CD8-positive, alpha-beta T cell (primary cell): ENCODE measurements at regions of chr12 and their contacts with region 1.

Region 1: GRCh38 chr12:5745265-5745888 is 199.7 kb downstream of the ANO2 start:
- DNase-seq: peak; percentile 16 to 64 (median 46)
- ATAC-seq: peak; percentile 56
- H3K4me3 ChIP-seq: no peak overlapping the region
- H3K4me3 Mint-ChIP-seq: no peak overlapping the region
- H3K27ac ChIP-seq: no peak overlapping the region
- H3K27ac Mint-ChIP-seq: no peak overlapping the region
- H3K4me1 ChIP-seq: peaks cover 18% of the 10 kb centered on the region
- H3K4me1 Mint-ChIP-seq: peaks cover 34% of the 10 kb centered on the region
- H3K27me3 ChIP-seq: no peaks in the 10 kb centered on the region
- H3K27me3 Mint-ChIP-seq: no peaks in the 10 kb centered on the region
- CTCF ChIP-seq: peak; percentile 50

Region 2: GRCh38 chr12:5796171-5796958 is 51.0 kb after region 1 on chr12:
- CTCF ChIA-PET with region 1: interaction called, 19 read pairs
- POLR2A ChIA-PET with region 1: interaction called, 3 read pairs
- intact Hi-C with region 1: loop called in 1 of 2 experiments (anchors 1 kb)
- DNase-seq: peak in 4 of 9 experiments; percentile 17 to 34 (median 24)
- ATAC-seq: peak; percentile 29
- H3K4me3 ChIP-seq: no peak overlapping the region
- H3K4me3 Mint-ChIP-seq: no peak overlapping the region
- H3K27ac ChIP-seq: no peak overlapping the region
- H3K27ac Mint-ChIP-seq: no peak overlapping the region
- H3K4me1 ChIP-seq: no peaks in the 10 kb centered on the region
- H3K4me1 Mint-ChIP-seq: no peaks in the 10 kb centered on the region
- H3K27me3 ChIP-seq: peaks cover 0 to 2% of the 10 kb centered on the region in 2 experiments
- H3K27me3 Mint-ChIP-seq: peaks cover 4% of the 10 kb centered on the region
- CTCF ChIP-seq: peak; percentile 56

Region 3: DNA sequence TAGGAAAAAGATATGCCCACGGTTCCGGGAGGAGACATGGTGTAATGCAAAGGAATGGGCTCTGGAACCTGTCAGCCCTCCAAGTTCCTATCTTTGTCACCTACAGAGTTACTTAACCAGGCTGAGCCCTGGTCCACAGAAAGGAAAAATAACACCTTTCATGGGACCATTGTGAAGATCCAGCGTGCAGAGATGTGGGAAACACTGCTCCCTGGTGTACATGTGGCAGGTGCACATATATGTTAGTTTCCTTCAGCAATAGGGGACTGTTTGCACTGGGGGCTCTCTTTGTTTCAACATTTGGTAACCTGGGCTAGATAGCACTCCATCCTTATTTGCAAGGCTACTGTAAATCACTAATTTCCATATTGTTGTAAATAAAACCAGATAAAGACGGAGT is 127.4 kb after region 1 on chr12:
- CTCF ChIA-PET with region 1: no interaction called
- POLR2A ChIA-PET with region 1: no interaction called
- intact Hi-C with region 1: loop called in 1 of 2 experiments (anchors 10 kb)
- DNase-seq: no peak
- ATAC-seq: no peak
- H3K4me3 ChIP-seq: no peak overlapping the region
- H3K4me3 Mint-ChIP-seq: no peak overlapping the region
- H3K27ac ChIP-seq: no peak overlapping the region
- H3K27ac Mint-ChIP-seq: no peak overlapping the region
- H3K4me1 ChIP-seq: no peaks in the 10 kb centered on the region
- H3K4me1 Mint-ChIP-seq: no peaks in the 10 kb centered on the region
- H3K27me3 ChIP-seq: peaks cover 0 to 3% of the 10 kb centered on the region in 2 experiments
- H3K27me3 Mint-ChIP-seq: peaks cover 20% of the 10 kb centered on the region
- CTCF ChIP-seq: no peak